ENCODE measurements at regions of chr6 and their contacts with region 1.

Region 1: GRCh38 chr6:89138173-89138572 is 7.7 kb upstream of the PM20D2 start:
- DNase-seq: no peak
- H3K4me3 ChIP-seq: no peak overlapping the region
- H3K27ac ChIP-seq: no peak overlapping the region
- H3K4me1 ChIP-seq: peaks cover 24% of the 10 kb centered on the region
- H3K27me3 ChIP-seq: no peaks in the 10 kb centered on the region
- CTCF ChIP-seq: no peak

Region 2: DNA sequence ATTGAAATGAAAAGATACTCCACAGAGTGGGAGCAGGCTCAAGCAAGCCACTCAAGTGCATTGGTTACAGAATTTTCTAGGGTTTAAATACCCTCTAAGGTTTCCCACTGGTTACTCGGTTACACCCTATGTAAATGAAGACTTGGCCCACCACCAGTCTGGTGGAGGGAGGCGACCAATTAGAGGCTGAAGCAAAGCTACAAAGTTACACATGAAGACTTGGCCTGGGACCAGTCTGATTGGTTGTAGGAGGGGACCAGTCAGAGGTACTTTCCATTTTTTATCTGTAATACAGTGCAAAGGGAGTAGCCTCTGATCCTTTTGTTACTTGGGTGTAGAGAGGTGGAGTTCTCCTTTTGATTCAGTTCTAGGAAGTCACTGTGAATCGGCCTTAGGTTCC is 27.9 kb before region 1 on chr6:
- CTCF ChIA-PET with region 1: no interaction called
- POLR2A ChIA-PET with region 1: no interaction called
- intact Hi-C with region 1: no loop called
- DNase-seq: no peak
- H3K4me3 ChIP-seq: no peak overlapping the region
- H3K27ac ChIP-seq: no peak overlapping the region
- H3K4me1 ChIP-seq: no peaks in the 10 kb centered on the region
- H3K27me3 ChIP-seq: no peaks in the 10 kb centered on the region
- CTCF ChIP-seq: no peak

Region 3: DNA sequence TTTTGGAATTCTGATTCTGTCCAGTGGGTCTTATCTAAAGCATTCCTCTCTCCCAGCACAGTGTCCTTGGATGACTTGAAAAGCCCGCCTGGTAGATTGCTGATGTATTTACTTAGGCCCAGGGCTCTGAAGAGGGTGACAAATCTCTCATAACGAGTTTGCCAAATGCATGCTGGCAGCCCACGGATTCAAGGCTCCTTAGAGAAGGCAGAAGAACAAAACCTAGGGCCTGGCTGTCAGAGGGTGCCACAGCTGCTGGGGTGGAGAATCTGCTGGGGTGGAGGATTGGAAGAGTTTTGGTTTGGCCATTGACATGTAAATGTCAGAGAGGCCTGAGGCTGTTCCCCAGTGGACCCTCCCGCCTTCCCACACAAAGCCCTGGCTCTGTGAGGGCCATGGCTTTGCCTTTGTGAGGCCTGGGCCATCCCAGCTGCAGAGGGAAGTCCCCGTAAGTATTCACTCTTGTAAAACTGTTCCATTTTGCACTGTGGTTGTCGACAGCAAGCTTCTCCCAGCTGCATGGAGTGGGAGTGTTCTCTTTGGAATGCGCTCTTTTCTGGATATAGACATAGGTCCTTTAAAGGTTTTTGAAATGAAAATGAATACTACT is 345.0 kb after region 1 on chr6:
- CTCF ChIA-PET with region 1: no interaction called
- POLR2A ChIA-PET with region 1: no interaction called
- intact Hi-C with region 1: no loop called
- DNase-seq: no peak
- H3K4me3 ChIP-seq: no peak overlapping the region
- H3K27ac ChIP-seq: no peak overlapping the region
- H3K4me1 ChIP-seq: no peaks in the 10 kb centered on the region
- H3K27me3 ChIP-seq: no peaks in the 10 kb centered on the region
- CTCF ChIP-seq: no peak

Region 4: DNA sequence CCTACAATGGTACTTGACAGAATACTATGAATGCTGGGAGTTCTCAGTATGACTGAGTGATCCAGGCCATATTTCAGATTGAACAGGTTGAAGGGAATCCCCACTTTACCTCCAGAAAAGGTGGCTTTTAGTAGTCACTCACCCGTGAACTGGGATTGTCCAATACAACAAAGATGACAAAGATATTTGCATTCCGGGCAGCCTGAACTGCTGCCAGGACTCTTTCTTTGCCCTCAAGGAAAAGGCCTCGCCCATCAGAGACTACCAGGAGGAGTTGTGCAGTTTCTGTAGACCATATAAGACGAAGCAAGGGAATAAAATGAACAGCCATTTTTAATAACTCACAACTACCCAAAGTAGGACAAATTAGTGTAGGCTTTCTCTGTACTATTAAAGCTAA is 506.7 kb after region 1 on chr6:
- CTCF ChIA-PET with region 1: no interaction called
- POLR2A ChIA-PET with region 1: interaction called, 36 read pairs
- intact Hi-C with region 1: no loop called
- DNase-seq: peak; percentile 58 to 61
- H3K4me3 ChIP-seq: no peak overlapping the region
- H3K27ac ChIP-seq: 0 out of 2 replicates have a peak overlapping the region, but pooled peaks have one; percentile 17
- H3K4me1 ChIP-seq: peaks cover 13% of the 10 kb centered on the region
- H3K27me3 ChIP-seq: no peaks in the 10 kb centered on the region
- CTCF ChIP-seq: no peak

Measured in PC-9 (cell line).